Adrenal gland (tissue), 19 donors: ENCODE measurements at regions of chr4 and their contacts with region 1.

Region 1: DNA sequence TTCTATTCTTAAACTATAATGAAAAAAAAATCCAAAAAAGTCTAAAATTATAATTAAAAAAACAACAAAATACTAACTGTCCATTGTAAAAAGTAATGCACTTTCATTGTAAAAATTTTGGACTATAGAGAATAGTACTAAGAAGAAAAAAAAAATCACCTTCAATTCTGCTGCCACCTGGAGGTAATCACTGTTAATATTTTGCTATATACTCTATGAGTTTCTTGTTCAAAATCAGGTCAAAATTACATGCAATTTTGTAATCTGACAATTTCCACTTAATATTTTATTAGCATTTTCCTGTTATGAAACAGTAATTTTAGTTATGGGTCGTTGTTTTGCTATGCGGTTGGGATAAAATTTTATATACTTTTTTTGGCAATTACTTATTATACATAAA is 62.0 kb downstream of the HTT start:
- DNase-seq: no peak
- H3K4me3 ChIP-seq: no peak overlapping the region
- H3K27ac ChIP-seq: no peak overlapping the region
- H3K4me1 ChIP-seq: no peaks in the 10 kb centered on the region
- H3K27me3 ChIP-seq: no peaks in the 10 kb centered on the region
- CTCF ChIP-seq: peak in 5 of 6 experiments; percentile 8 to 52 (median 47)
- POLR2A ChIP-seq: no peak

Region 2: GRCh38 chr4:3106339-3107186 is 29.9 kb before region 1 on chr4:
- intact Hi-C with region 1: loop called in 1 of 2 experiments (anchors 5 kb)
- DNase-seq: peak; percentile 88 to 96 (median 93)
- H3K4me3 ChIP-seq: no peak overlapping the region
- H3K27ac ChIP-seq: peak overlapping the region in 3 of 5 donors; percentile 14 to 62 (median 61)
- H3K4me1 ChIP-seq: peaks cover 3 to 17% of the 10 kb centered on the region in 2 donors
- H3K27me3 ChIP-seq: no peaks in the 10 kb centered on the region
- CTCF ChIP-seq: peak; percentile 89 to 97 (median 96)
- POLR2A ChIP-seq: no peak